Colonic mucosa (tissue), 4 donors: ENCODE measurements at regions of chr1 and their contacts with region 1.

Region 1: DNA sequence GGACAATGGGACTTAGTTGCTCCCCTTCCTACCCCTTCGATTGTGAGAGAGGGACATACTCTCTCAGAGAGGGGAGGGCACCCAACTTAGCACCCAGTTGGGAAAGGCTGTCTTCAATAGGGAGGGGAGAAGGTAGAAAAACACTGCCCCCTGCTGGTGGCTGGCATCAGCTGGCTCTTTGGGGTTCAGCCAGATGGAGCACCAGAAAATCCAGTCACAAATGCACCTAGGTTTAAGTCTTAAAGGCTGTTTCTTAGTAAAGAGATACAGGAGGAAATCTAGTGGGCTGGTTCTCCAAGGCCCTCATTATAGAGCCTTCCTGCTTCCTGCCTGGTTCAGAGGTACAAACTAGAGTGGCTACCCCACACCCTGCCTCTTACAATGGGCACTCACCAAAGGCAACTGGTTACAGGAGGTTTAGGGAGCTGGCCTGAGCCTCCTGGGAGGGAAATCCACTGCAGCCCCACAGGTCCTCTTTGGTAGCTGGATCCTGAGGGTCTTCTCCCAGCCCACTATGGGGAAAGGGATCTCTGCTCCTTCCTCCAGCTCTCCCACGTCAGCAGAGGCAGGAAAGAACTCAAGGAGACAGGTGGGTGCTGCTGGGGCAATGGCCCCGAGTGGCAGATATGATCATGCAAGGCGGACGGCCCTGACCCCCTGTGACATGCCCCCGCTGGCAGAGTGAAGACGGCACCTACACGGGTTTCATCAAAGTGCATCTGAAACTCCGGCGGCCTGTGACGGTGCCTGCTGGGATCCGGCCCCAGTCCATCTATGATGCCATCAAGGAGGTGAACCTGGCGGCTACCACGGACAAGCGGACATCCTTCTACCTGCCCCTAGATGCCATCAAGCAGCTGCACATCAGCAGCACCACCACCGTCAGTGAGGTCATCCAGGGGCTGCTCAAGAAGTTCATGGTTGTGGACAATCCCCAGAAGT is 28.3 kb downstream of the EIF2D start:
- DNase-seq: peak; percentile 86
- H3K4me3 ChIP-seq: no peak overlapping the region
- H3K27ac ChIP-seq: no peak overlapping the region
- H3K4me1 ChIP-seq: peaks cover 4% of the 10 kb centered on the region
- H3K27me3 ChIP-seq: no peaks in the 10 kb centered on the region
- CTCF ChIP-seq: peak; percentile 91

Region 2: GRCh38 chr1:206479183-206480125 is 104.5 kb before region 1 on chr1:
- intact Hi-C with region 1: loop called (anchors 5 kb)
- DNase-seq: peak; percentile 69
- H3K4me3 ChIP-seq: no peak overlapping the region
- H3K27ac ChIP-seq: no peak overlapping the region
- H3K4me1 ChIP-seq: no peaks in the 10 kb centered on the region
- H3K27me3 ChIP-seq: no peaks in the 10 kb centered on the region
- CTCF ChIP-seq: peak; percentile 76

Region 3: DNA sequence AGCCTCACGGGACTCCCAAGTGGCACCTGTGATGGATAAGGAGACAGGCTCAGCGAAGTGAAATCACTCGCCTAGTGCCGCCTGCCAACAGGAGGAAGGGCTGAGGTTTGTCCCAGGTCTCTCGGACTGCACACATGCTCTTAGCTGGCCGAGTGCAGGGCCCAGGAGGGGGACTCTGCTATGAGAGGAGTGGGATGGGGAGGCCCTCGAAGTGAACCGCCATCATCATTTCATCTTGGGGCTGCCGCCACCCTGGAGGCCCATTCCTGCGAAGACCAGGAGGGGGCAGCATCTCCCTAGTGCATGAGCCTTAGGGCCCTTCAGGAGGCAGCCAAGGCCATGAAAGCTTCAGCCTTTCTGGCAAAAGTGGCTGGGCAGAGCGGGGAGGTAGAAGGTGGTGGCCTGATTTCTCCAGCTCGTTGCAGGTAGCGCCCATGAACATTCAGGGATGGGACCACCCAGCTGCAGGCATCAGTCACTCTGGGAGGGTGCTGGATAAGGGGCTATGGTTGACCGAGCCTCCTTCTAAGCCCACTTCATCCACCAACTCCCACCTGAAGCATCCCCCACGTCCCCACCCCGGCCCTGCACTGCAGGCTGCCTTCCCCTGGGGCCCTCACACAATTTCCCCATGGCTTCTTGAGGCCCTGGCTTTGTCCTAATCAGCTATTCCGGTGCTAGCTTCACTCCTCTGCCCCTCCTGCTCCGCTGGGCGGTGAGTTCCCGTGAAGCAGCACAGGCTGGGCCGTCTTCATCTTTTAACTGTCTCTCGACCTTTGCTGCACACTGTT is 93.8 kb before region 1 on chr1:
- intact Hi-C with region 1: loop called (anchors 2 kb)
- DNase-seq: peak; percentile 74
- H3K4me3 ChIP-seq: no peak overlapping the region
- H3K27ac ChIP-seq: no peak overlapping the region
- H3K4me1 ChIP-seq: no peaks in the 10 kb centered on the region
- H3K27me3 ChIP-seq: no peaks in the 10 kb centered on the region
- CTCF ChIP-seq: peak; percentile 71

Region 4: GRCh38 chr1:206544562-206545257 is 39.3 kb before region 1 on chr1:
- intact Hi-C with region 1: loop called (anchors 1 kb)
- DNase-seq: peak; percentile 85
- H3K4me3 ChIP-seq: no peak overlapping the region
- H3K27ac ChIP-seq: no peak overlapping the region
- H3K4me1 ChIP-seq: peaks cover 4% of the 10 kb centered on the region
- H3K27me3 ChIP-seq: no peaks in the 10 kb centered on the region
- CTCF ChIP-seq: peak; percentile 86

Region 5: DNA sequence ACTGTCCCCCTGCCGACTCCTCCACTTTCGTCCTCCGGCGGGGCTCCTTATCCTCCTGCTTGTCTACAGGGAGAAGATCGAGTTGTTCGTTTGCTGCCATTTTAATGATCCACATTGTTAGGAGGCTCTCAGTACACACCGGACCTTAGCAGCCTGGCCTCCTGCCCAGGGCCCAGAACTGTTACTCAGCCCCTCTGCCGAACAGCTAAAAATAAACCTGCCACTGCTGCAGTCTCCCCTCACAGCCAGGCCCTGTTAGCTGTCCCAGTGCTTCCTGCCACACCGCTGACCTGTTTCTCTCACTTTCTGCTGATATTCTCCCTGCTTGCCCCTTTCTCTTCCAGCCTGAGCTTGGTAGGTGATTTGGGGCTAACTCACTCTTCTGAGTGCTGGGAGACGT is 109.1 kb after region 1 on chr1:
- intact Hi-C with region 1: no loop called
- DNase-seq: no peak
- H3K4me3 ChIP-seq: no peak overlapping the region
- H3K27ac ChIP-seq: peak overlapping the region; percentile 22
- H3K4me1 ChIP-seq: peaks cover 3% of the 10 kb centered on the region
- H3K27me3 ChIP-seq: no peaks in the 10 kb centered on the region
- CTCF ChIP-seq: no peak